ENCODE measurements at regions of chr2 and their contacts with region 1.

Region 1: GRCh38 chr2:47189635-47190034 is 34.5 kb upstream of the STPG4 start:
- DNase-seq: peak; percentile 61
- H3K4me3 ChIP-seq: no peak overlapping the region
- H3K27ac ChIP-seq: peak overlapping the region; percentile 17
- H3K4me1 ChIP-seq: peaks cover 54% of the 10 kb centered on the region
- H3K27me3 ChIP-seq: no peaks in the 10 kb centered on the region
- CTCF ChIP-seq: no peak

Region 2: GRCh38 chr2:47174733-47175361 is 14.8 kb before region 1 on chr2:
- CTCF ChIA-PET with region 1: no interaction called
- dilution Hi-C with region 1: no loop called
- in situ Hi-C with region 1: no loop called
- intact Hi-C with region 1: no loop called
- DNase-seq: peak; percentile 93
- H3K4me3 ChIP-seq: peak overlapping the region; percentile 91 to 98 (median 93)
- H3K27ac ChIP-seq: peak overlapping the region; percentile 99
- H3K4me1 ChIP-seq: peaks cover 30% of the 10 kb centered on the region
- H3K27me3 ChIP-seq: no peaks in the 10 kb centered on the region
- CTCF ChIP-seq: no peak

Region 3: DNA sequence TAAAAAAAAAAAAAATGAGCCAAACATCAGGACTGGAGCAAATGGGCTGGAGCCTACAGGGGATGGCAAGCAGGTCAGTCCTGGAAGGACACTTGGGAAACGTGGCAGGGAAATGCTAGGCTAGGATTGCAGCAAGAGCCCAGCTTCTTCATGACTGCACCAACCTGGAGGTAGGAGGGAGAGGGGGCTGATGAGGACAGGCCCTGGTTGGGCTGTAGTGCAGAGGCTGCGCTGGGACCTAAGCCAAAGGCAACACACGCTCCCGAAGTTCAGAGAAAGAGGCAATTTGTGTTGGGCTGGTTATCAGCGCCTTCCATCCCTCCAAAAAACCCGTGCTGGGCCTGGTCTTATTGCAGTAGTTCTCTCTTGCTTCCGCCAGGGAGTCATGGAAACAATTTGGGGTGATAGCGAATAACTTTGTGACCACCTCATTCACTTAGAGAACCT is 47.8 kb after region 1 on chr2:
- CTCF ChIA-PET with region 1: no interaction called
- dilution Hi-C with region 1: loop called (anchors 10 kb)
- in situ Hi-C with region 1: no loop called
- intact Hi-C with region 1: no loop called
- DNase-seq: no peak
- H3K4me3 ChIP-seq: no peak overlapping the region
- H3K27ac ChIP-seq: no peak overlapping the region
- H3K4me1 ChIP-seq: no peaks in the 10 kb centered on the region
- H3K27me3 ChIP-seq: no peaks in the 10 kb centered on the region
- CTCF ChIP-seq: no peak

Measured in mammary epithelial cell (primary cell).